Dorsolateral prefrontal cortex (tissue), 120 donors: ENCODE measurements at regions of chr19 and their contacts with region 1.

Region 1: GRCh38 chr19:13794757-13795589 is at the start of gene ZSWIM4:
- DNase-seq: peak; percentile 97 to 99 (median 99)
- H3K4me3 ChIP-seq: peak within 1 kb of the TSS; percentile 55 to 91 (median 78)
- H3K27ac ChIP-seq: peak within 1 kb of the TSS in 46 of 59 donors; percentile 3 to 89 (median 74)
- H3K27me3 ChIP-seq: no peaks in the 10 kb centered on the region
- CTCF ChIP-seq: peak in 10 of 56 donors; percentile 5 to 45 (median 16)
- total RNA-seq, gene ZSWIM4: 4.0 to 10.0 (median 6.6) TPM

Region 2: DNA sequence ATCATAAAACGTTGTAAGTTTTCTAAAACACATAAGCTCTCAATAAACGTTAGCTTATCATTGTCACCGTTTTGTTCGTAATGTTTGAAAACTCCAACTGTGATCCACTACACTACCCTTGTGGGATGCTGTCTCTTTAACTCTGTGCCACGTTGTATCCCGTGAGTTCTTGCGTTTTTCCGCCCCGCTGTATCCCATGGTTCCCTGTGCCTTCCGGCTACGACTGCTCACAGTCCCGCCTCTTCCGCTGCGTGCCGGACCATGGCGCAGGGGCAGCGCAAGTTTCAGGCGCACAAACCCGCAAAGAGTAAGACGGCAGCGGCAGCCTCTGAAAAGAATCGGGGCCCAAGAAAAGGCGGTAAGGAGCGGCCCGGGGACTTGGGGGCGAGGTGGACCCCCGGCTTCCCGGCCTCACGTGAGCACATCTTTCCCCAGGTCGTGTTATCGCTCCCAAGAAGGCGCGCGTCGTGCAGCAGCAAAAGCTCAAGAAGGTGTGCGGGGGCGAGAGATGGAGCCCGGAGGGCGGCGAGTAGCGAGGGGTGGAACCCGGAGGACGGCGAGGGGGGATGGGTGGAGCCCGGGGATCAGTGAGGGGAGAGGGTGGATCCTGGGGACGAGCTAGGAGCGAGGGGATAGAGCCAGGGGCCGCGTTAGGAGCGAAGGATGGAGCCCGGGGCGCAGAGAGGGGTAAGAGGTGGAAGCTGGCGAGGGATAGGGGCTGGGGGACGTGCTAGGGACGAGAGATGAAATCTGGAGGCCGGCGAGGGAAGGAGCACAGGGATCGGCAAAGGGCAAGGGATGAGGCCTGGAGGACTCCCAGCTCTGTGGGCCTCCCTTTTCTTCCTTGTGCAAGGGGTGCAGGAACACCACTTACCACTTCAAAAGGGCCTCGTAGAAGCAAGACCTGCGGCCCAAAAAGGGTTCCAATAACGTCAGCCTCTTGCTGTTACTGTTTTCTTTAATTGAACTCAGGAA is 20.5 kb before region 1 on chr19 and contains the start of gene C19orf53:
- intact Hi-C with region 1: loop called in 1 of 2 experiments (anchors 2 kb)
- DNase-seq: peak; percentile 92 to 97 (median 94)
- H3K4me3 ChIP-seq: peak within 1 kb of the TSS; percentile 59 to 99 (median 87)
- H3K27ac ChIP-seq: peak within 1 kb of the TSS in 56 of 59 donors; percentile 32 to 95 (median 81)
- H3K27me3 ChIP-seq: no peaks in the 10 kb centered on the region
- CTCF ChIP-seq: peak in 16 of 56 donors; percentile 16 to 57 (median 37)
- total RNA-seq, gene C19orf53: 44.9 to 112 (median 67.3) TPM

Region 3: GRCh38 chr19:13846557-13847406 is 51.8 kb after region 1 on chr19:
- intact Hi-C with region 1: loop called (anchors 2 kb)
- DNase-seq: peak in 5 of 10 donors; percentile 49 to 81 (median 68)
- H3K4me3 ChIP-seq: peak overlapping the region; percentile 26 to 75 (median 59)
- H3K27ac ChIP-seq: peak overlapping the region; percentile 75 to 99 (median 96)
- H3K27me3 ChIP-seq: no peaks in the 10 kb centered on the region
- CTCF ChIP-seq: no peak

Region 4: DNA sequence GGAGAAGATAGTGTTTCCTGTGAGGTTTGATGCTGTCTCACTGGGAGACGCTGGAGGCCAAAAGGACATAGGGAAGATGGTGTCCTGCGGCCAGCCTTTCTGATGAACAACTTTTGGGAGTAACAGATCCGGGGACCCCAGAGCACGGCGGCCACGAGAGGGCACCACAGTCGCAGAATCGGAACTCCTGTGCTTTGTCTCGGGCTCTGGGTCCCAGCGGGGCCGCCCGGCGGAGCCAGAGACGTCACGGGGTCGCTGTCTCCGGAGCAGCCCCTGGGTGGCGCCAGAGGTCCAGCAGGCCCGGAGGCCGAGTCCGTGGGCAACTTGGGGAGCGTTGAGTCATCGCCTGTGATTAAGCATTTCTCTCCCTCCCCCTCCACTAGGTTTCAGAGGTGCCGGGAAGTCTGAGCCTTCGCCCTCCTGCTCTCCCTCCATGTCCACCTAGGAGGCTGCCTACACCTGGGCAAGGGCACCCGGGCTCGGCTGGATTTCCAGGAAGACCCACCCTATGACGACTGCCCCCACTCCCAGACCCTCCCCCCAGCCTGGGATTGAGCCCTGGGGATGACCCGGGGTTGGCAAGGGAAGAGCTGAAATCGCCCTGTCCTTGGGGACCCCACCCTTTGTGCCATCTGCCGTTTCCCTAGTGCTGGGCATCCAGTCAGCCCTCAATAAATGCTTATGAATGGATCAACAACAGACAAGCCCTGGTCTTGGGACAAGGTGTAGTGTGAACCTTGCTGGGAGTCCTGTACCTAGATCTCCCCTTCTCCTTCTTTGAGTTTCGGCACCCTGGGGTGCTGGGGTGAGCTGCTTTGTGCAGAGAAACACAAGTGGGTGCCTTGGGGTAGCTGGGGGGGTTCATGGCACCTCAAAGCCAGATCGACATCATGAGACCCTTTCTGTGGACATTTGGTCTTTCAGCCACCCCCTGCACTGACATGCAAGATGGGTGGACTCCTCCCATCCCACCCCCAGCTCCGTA is 85.4 kb after region 1 on chr19:
- intact Hi-C with region 1: no loop called
- DNase-seq: peak; percentile 95 to 98 (median 97)
- H3K4me3 ChIP-seq: peak overlapping the region in 57 of 59 donors; percentile 14 to 66 (median 43)
- H3K27ac ChIP-seq: peak overlapping the region in 51 of 59 donors; percentile 10 to 92 (median 77)
- H3K27me3 ChIP-seq: no peaks in the 10 kb centered on the region
- CTCF ChIP-seq: peak; percentile 92 to 100 (median 100)